ENCODE measurements at regions of chr6 and their contacts with region 1.

Region 1: DNA sequence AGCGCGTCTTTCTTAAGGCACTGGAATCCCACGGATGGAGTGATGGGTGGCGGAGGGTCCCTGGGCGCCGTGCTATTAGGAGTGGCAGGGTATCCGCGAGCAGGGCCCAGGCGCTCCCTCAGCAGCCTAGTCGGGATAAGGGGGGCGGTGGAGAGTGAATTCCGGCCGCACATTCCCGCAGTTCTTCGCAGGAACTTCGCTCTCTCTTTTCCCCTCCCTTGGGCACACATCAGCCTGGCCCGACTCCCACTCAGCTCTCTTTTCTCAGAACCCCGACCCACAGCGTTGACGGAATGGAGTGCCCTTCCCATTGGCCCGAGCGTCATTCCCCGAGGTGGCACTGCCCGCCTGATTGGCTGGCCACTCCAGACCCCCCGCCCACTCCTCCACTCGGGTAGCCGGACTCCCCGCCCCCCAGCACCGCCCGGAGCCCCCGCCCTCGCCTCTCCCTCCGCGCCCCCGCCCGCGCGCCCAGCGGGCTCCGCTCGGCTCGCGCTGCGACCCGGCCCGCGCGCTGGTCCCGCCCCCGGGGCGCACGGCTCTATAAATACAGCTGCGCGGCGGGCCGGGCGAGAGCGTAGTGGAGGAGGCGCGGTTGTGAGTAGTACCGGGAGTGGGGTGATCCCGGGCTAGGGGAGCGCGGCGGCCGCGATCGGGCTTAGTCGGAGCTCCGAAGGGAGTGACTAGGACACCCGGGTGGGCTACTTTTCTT is at the start of gene ID4:
- DNase-seq: peak; percentile 94

Region 2: GRCh38 chr6:19322691-19323485 is 514.1 kb before region 1 on chr6:
- CTCF ChIA-PET with region 1: no interaction called
- POLR2A ChIA-PET with region 1: interaction called, 10 read pairs
- DNase-seq: no peak

Region 3: DNA sequence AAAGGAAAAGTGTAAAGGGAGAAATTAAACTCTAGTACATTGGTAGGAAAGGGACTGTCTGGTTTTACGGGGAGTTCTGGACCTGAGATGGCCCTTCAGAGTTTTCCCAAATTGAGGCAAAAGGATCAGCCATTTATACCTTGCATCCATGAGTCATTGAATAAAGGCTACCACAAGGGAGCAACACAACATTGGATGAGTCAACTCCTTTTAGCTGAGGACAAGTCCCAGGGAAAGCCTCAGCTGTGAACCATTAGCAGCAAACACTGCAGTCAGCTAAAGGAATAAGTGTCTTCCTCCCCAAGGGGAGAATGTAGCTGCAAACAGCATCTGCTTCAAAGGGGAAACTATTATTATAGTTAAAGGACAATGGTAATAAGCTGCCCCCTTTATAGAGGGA is 468.4 kb before region 1 on chr6:
- CTCF ChIA-PET with region 1: interaction called, 10 read pairs
- POLR2A ChIA-PET with region 1: no interaction called
- DNase-seq: no peak

Region 4: DNA sequence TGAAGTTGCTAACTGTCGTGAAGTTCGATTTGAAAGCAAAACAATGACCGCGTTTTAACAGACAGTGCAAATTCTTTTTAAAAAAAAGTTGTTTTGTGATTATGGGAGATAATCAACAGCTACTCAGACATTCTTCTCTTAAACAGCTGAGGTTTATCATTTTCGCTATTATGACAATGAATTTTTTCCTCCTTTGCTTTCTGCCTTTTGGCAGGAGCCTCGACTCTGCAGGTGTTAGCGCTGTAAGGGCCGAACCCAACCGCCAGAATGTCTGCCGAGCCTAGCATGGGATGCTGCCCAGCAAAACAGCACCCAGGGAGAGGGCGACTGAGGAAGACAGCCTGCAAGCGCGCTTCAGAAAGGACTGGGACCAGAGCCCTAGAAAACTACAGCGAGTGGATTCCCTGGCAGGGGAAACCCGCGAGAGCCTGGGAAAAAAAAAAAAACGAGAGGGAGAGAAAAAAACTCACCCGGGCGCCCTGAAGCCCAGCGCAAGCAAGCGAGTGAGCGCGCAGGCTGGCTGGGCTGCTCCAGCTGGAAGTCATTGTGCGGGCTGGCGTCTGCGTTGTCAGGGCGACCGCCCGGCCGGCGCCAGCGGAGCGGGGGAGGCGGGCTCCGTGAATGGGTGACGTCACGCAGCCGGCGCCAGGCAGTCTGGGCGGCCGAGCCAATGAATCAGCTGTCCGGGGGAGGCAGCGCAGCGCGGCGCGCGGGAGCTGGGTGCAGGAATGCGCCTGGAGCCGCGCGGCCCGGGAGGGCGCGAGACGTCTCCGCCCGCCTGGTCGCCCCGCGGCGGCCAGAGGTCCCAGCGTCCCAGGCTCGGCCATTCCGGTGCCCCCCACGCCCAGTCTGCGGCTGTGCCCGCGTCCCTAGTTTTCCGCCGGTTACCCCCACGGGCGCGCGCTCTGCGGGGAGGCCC is 32.5 kb before region 1 on chr6:
- CTCF ChIA-PET with region 1: interaction called, 4 read pairs
- POLR2A ChIA-PET with region 1: interaction called, 24 read pairs
- DNase-seq: peak; percentile 94

Region 5: GRCh38 chr6:19851241-19852089 is 14.5 kb after region 1 on chr6:
- CTCF ChIA-PET with region 1: interaction called, 3 read pairs
- POLR2A ChIA-PET with region 1: interaction called, 12 read pairs
- DNase-seq: peak; percentile 79